ENCODE measurements at regions of chr4 and their contacts with region 1.

Region 1: DNA sequence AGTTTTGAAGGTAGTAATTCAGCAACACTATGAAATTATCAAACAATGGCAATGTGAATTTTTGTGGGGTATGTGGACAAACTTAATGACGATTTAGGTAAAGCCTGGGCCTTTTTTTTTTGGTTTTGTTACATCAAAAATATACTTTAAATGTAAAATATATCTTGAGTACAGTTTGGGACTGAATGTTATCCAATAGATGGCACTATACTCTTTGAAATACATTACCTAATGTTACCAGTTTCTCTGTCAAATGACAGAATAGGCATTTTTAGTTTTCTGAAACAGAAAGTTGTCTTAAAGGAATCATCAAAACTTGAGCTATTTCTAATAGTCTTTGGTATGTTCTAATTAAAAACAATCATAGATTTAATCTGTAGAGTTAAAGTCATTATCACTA is 1651.9 kb downstream of the C4orf33 start:
- DNase-seq: no peak
- H3K4me3 ChIP-seq: no peak overlapping the region
- H3K27ac ChIP-seq: no peak overlapping the region
- H3K4me1 ChIP-seq: no peaks in the 10 kb centered on the region
- H3K27me3 ChIP-seq: no peaks in the 10 kb centered on the region
- CTCF ChIP-seq: no peak
- POLR2A ChIP-seq: no peak

Region 2: GRCh38 chr4:132227151-132227856 is 1479.5 kb after region 1 on chr4:
- CTCF ChIA-PET with region 1: no interaction called
- POLR2A ChIA-PET with region 1: no interaction called
- dilution Hi-C with region 1: no loop called
- intact Hi-C with region 1: loop called (anchors 5 kb)
- DNase-seq: peak; percentile 19
- H3K4me3 ChIP-seq: peak overlapping the region in 1 of 3 experiments; percentile 22
- H3K27ac ChIP-seq: no peak overlapping the region
- H3K4me1 ChIP-seq: no peaks in the 10 kb centered on the region
- H3K27me3 ChIP-seq: no peaks in the 10 kb centered on the region
- CTCF ChIP-seq: no peak
- POLR2A ChIP-seq: no peak

Region 3: GRCh38 chr4:132614682-132615081 is 1866.8 kb after region 1 on chr4:
- CTCF ChIA-PET with region 1: no interaction called
- POLR2A ChIA-PET with region 1: no interaction called
- dilution Hi-C with region 1: no loop called
- intact Hi-C with region 1: loop called (anchors 10 kb)
- DNase-seq: peak; percentile 19
- H3K4me3 ChIP-seq: no peak overlapping the region
- H3K27ac ChIP-seq: no peak overlapping the region
- H3K4me1 ChIP-seq: no peaks in the 10 kb centered on the region
- H3K27me3 ChIP-seq: no peaks in the 10 kb centered on the region
- CTCF ChIP-seq: peak; percentile 13 to 18
- POLR2A ChIP-seq: no peak

Measured in endothelial cell of umbilical vein (primary cell).